ENCODE measurements at regions of chr17 and their contacts with region 1.

Region 1: DNA sequence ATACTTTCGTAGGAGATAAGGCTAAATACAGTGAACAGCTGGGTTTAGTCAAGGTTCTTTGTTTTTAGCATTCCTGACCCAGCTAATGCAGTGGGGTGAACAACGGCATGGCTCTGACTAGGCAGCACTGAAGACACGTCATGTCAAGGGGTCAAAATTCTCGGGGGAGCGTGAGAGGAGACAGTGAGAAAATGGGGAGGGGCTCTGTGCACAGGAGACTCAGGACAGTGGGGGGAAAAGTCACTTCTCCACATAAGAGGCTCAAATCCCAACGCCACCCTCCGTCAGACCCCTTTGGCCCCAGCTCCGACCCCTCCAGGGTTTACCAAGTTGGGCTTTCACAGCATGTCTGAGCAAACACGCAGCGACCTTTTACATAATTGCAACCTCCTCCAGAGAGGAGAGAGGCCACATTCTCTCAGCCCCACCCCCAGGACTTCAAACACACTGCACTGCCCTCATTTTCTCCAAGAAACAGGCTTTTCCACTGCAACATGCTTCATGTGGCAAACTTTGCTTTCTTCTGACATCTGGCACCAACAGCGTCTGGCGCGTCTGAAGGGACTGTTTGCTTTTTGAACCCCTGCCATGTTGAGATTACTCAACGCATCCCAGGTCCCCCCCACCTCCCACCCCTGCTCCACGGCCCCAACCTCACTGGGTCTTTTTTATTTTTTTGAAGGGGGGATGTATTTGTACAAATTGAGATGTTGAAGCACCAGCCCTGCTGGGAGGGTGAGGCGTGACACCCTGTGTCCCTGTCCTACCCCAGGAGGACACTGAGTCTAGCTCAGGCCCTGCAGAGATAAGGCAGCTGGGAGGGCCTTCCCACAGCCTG is 30.0 kb downstream of the AXIN2 start:
- DNase-seq: peak; percentile 88 to 89
- H3K4me3 ChIP-seq: no peak overlapping the region
- H3K4me3 Mint-ChIP-seq: peak overlapping the region; percentile 54
- H3K27ac Mint-ChIP-seq: peak overlapping the region; percentile 88
- H3K4me1 ChIP-seq: peaks cover 69% of the 10 kb centered on the region
- H3K4me1 Mint-ChIP-seq: peaks cover 63% of the 10 kb centered on the region
- H3K27me3 ChIP-seq: no peaks in the 10 kb centered on the region
- H3K27me3 Mint-ChIP-seq: no peaks in the 10 kb centered on the region
- CTCF ChIP-seq: peak; percentile 41 to 58

Region 2: GRCh38 chr17:65278050-65278819 is 253.2 kb before region 1 on chr17:
- CTCF ChIA-PET with region 1: no interaction called
- POLR2A ChIA-PET with region 1: interaction called, 12 read pairs
- intact Hi-C with region 1: no loop called
- DNase-seq: peak; percentile 81 to 82
- H3K4me3 ChIP-seq: no peak overlapping the region
- H3K4me3 Mint-ChIP-seq: peak overlapping the region; percentile 39
- H3K27ac Mint-ChIP-seq: no peak overlapping the region
- H3K4me1 ChIP-seq: peaks cover 14% of the 10 kb centered on the region; the same call in 1 of the 2 replicates
- H3K4me1 Mint-ChIP-seq: peaks cover 9% of the 10 kb centered on the region
- H3K27me3 ChIP-seq: no peaks in the 10 kb centered on the region
- H3K27me3 Mint-ChIP-seq: peaks cover 4% of the 10 kb centered on the region
- CTCF ChIP-seq: peak; percentile 82 to 89

Region 3: GRCh38 chr17:65515959-65516948 is 15.2 kb before region 1 on chr17:
- CTCF ChIA-PET with region 1: interaction called, 7 read pairs
- POLR2A ChIA-PET with region 1: no interaction called
- intact Hi-C with region 1: loop called (anchors 1 kb)
- DNase-seq: peak; percentile 73 to 76
- H3K4me3 ChIP-seq: no peak overlapping the region
- H3K4me3 Mint-ChIP-seq: peak overlapping the region; percentile 25
- H3K27ac Mint-ChIP-seq: peak overlapping the region; percentile 91
- H3K4me1 ChIP-seq: peaks cover 19% of the 10 kb centered on the region
- H3K4me1 Mint-ChIP-seq: peaks cover 14% of the 10 kb centered on the region
- H3K27me3 ChIP-seq: no peaks in the 10 kb centered on the region
- H3K27me3 Mint-ChIP-seq: no peaks in the 10 kb centered on the region
- CTCF ChIP-seq: no peak

Region 4: GRCh38 chr17:65547253-65547670 is 15.8 kb after region 1 on chr17:
- CTCF ChIA-PET with region 1: no interaction called
- POLR2A ChIA-PET with region 1: no interaction called
- intact Hi-C with region 1: no loop called
- DNase-seq: peak; percentile 60 to 75
- H3K4me3 ChIP-seq: no peak overlapping the region
- H3K4me3 Mint-ChIP-seq: peak overlapping the region; percentile 4
- H3K27ac Mint-ChIP-seq: peak overlapping the region; percentile 22
- H3K4me1 ChIP-seq: peaks cover 78% of the 10 kb centered on the region
- H3K4me1 Mint-ChIP-seq: peaks cover 55% of the 10 kb centered on the region
- H3K27me3 ChIP-seq: no peaks in the 10 kb centered on the region
- H3K27me3 Mint-ChIP-seq: no peaks in the 10 kb centered on the region
- CTCF ChIP-seq: no peak

Region 5: GRCh38 chr17:65584604-65585541 is 53.4 kb after region 1 on chr17:
- CTCF ChIA-PET with region 1: no interaction called
- POLR2A ChIA-PET with region 1: no interaction called
- intact Hi-C with region 1: no loop called
- DNase-seq: no peak
- H3K4me3 ChIP-seq: no peak overlapping the region
- H3K4me3 Mint-ChIP-seq: no peak overlapping the region
- H3K27ac Mint-ChIP-seq: no peak overlapping the region
- H3K4me1 ChIP-seq: peaks cover 45% of the 10 kb centered on the region
- H3K4me1 Mint-ChIP-seq: peaks cover 42% of the 10 kb centered on the region
- H3K27me3 ChIP-seq: no peaks in the 10 kb centered on the region
- H3K27me3 Mint-ChIP-seq: no peaks in the 10 kb centered on the region
- CTCF ChIP-seq: no peak

Region 6: GRCh38 chr17:65627891-65628659 is 96.6 kb after region 1 on chr17:
- CTCF ChIA-PET with region 1: no interaction called
- POLR2A ChIA-PET with region 1: no interaction called
- intact Hi-C with region 1: no loop called
- DNase-seq: peak; percentile 57 to 58
- H3K4me3 ChIP-seq: no peak overlapping the region
- H3K4me3 Mint-ChIP-seq: peak overlapping the region; percentile 62
- H3K27ac Mint-ChIP-seq: peak overlapping the region; percentile 39
- H3K4me1 ChIP-seq: peaks cover 33% of the 10 kb centered on the region
- H3K4me1 Mint-ChIP-seq: peaks cover 36% of the 10 kb centered on the region
- H3K27me3 ChIP-seq: no peaks in the 10 kb centered on the region
- H3K27me3 Mint-ChIP-seq: no peaks in the 10 kb centered on the region
- CTCF ChIP-seq: no peak

Measured in Caco-2 (cell line).